Activated B cell treated with CpG ODN at 0.5 μM for 24 hours (primary cell): ENCODE measurements at regions of chr1 and their contacts with region 1.

Region 1: GRCh38 chr1:35715568-35716002 is 3.1 kb downstream of the C1orf216 start:
- DNase-seq: peak; percentile 56
- ATAC-seq: peak; percentile 67
- H3K4me3 Mint-ChIP-seq: peak overlapping the region; percentile 32
- H3K27ac Mint-ChIP-seq: no peak overlapping the region
- H3K4me1 Mint-ChIP-seq: peaks cover 28% of the 10 kb centered on the region
- H3K27me3 Mint-ChIP-seq: no peaks in the 10 kb centered on the region
- CTCF ChIP-seq: no peak

Region 2: GRCh38 chr1:35451125-35451528 is 264.5 kb before region 1 on chr1:
- CTCF ChIA-PET with region 1: interaction called, 25 read pairs
- POLR2A ChIA-PET with region 1: no interaction called
- intact Hi-C with region 1: loop called (anchors 2 kb)
- DNase-seq: peak; percentile 48
- ATAC-seq: peak; percentile 87
- H3K4me3 Mint-ChIP-seq: no peak overlapping the region
- H3K27ac Mint-ChIP-seq: no peak overlapping the region
- H3K4me1 Mint-ChIP-seq: no peaks in the 10 kb centered on the region
- H3K27me3 Mint-ChIP-seq: no peaks in the 10 kb centered on the region
- CTCF ChIP-seq: no peak

Region 3: GRCh38 chr1:35544978-35545377 is 170.6 kb before region 1 on chr1:
- CTCF ChIA-PET with region 1: no interaction called
- POLR2A ChIA-PET with region 1: no interaction called
- intact Hi-C with region 1: no loop called
- DNase-seq: no peak
- ATAC-seq: no peak
- H3K4me3 Mint-ChIP-seq: no peak overlapping the region
- H3K27ac Mint-ChIP-seq: no peak overlapping the region
- H3K4me1 Mint-ChIP-seq: peaks cover 26% of the 10 kb centered on the region
- H3K27me3 Mint-ChIP-seq: no peaks in the 10 kb centered on the region
- CTCF ChIP-seq: no peak

Region 4: DNA sequence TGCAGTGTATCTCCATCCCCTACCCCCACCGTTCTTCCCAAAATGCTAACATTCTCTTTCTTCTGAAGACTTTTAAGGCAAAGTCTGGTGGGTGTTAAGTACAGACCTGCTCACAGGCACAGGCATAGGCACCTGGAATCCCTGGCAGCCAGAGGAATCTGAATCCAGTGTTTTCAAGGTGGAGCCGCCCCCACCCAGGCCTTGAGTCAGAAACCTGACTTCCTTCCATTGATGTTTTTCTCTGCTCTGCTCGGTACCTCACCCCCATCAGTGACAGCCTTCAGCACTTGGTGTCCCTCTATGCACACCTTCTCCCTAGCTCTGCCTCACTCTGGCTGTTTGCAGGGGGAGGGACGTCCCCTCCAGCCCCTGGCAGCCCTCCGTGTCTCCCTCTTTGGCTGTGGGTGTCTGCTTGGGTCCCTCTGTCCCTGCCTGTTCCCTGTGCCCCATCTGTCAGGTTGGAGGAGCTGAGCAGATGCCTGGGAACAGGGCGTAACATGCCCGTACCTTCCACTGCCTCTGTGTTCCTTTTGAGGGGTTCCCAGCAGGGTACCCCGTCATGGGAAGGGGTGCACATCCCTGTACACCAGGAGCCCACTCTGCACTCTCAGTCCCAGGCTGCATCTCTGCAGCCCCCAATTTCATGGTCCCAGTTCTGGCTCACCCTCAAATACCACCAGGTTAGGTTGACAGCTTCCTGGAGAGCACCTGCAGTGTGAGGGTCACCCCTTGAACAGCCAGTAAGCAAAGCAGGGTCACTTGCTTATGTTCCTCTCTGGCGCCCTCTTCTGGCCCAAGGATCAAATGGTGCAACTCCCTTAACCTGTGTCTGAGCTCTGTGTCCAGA is 151.3 kb before region 1 on chr1:
- CTCF ChIA-PET with region 1: interaction called, 37 read pairs
- POLR2A ChIA-PET with region 1: no interaction called
- intact Hi-C with region 1: loop called (anchors 1 kb)
- DNase-seq: peak; percentile 60
- ATAC-seq: peak; percentile 82
- H3K4me3 Mint-ChIP-seq: no peak overlapping the region
- H3K27ac Mint-ChIP-seq: no peak overlapping the region
- H3K4me1 Mint-ChIP-seq: peaks cover 4% of the 10 kb centered on the region
- H3K27me3 Mint-ChIP-seq: no peaks in the 10 kb centered on the region
- CTCF ChIP-seq: peak; percentile 55

Region 5: DNA sequence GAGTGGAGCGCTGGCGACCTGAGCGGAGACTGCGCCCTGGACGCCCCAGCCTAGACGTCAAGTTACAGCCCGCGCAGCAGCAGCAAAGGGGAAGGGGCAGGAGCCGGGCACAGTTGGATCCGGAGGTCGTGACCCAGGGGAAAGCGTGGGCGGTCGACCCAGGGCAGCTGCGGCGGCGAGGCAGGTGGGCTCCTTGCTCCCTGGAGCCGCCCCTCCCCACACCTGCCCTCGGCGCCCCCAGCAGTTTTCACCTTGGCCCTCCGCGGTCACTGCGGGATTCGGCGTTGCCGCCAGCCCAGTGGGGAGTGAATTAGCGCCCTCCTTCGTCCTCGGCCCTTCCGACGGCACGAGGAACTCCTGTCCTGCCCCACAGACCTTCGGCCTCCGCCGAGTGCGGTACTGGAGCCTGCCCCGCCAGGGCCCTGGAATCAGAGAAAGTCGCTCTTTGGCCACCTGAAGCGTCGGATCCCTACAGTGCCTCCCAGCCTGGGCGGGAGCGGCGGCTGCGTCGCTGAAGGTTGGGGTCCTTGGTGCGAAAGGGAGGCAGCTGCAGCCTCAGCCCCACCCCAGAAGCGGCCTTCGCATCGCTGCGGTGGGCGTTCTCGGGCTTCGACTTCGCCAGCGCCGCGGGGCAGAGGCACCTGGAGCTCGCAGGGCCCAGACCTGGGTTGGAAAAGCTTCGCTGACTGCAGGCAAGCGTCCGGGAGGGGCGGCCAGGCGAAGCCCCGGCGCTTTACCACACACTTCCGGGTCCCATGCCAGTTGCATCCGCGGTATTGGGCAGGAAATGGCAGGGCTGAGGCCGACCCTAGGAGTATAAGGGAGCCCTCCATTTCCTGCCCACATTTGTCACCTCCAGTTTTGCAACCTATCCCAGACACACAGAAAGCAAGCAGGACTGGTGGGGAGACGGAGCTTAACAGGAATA is 138.2 kb before region 1 on chr1:
- CTCF ChIA-PET with region 1: interaction called, 13 read pairs
- POLR2A ChIA-PET with region 1: interaction called, 3 read pairs
- intact Hi-C with region 1: no loop called
- DNase-seq: peak; percentile 60
- ATAC-seq: peak; percentile 84
- H3K4me3 Mint-ChIP-seq: peak overlapping the region; percentile 90
- H3K27ac Mint-ChIP-seq: peak overlapping the region; percentile 87
- H3K4me1 Mint-ChIP-seq: peaks cover 27% of the 10 kb centered on the region
- H3K27me3 Mint-ChIP-seq: peaks cover 13% of the 10 kb centered on the region
- CTCF ChIP-seq: no peak

Region 6: GRCh38 chr1:35641233-35641866 is 74.2 kb before region 1 on chr1 and contains the start of gene PSMB2:
- CTCF ChIA-PET with region 1: interaction called, 3 read pairs
- POLR2A ChIA-PET with region 1: no interaction called
- intact Hi-C with region 1: loop called (anchors 2 kb)
- DNase-seq: peak; percentile 92
- ATAC-seq: peak; percentile 93
- H3K4me3 Mint-ChIP-seq: peak within 1 kb of the TSS; percentile 100
- H3K27ac Mint-ChIP-seq: peak within 1 kb of the TSS; percentile 99
- H3K4me1 Mint-ChIP-seq: peaks cover 40% of the 10 kb centered on the region
- H3K27me3 Mint-ChIP-seq: peaks cover 16% of the 10 kb centered on the region
- CTCF ChIP-seq: no peak
- total RNA-seq, gene PSMB2: 54.5 and 56.3 TPM in 2 replicates